ENCODE measurements at regions of chr11 and their contacts with region 1.

Region 1: DNA sequence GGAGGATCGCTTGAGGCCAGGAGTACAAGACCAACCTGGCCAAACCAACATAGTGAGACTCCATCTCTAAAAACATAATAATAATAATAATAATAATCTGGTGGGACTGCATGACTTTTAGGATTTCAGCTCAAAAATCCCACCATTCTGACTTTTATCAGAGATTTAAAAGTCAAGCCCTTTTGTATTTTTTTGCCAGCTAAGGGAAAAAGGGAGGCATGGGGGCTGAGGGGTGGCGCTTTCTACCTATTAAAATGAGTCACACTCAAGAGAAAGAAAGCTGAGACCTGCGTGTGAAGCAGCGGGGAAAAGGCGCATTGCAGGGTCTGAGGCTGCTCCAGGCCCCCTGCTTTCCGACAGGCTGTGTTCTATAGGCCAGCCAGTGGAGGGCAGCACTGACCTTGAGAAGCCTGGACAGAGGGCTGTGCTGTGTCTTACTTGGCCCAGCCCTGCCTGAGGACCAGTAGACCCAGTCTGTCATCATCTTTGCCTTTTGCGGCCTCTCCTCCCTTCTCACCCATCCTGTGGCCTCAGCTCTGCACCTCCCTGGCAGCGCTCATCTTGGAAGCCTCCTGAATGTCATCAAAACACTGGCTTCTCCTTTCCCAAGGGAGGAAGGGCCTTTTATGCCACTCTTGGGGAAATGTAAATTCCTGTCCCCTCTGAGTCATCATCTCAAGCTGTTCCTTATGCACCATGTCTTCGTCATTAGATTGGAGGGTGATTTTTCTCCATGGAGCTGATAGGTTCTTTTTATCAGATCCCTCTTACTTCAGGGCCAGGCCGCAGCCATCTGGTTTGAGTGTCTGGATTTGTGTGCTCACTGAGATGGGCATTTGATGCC is 12.7 kb upstream of the MAPK8IP1 start:
- DNase-seq: peak; percentile 73 to 86
- H3K4me3 ChIP-seq: no peak overlapping the region
- H3K27ac ChIP-seq: no peak overlapping the region
- H3K4me1 ChIP-seq: peaks cover 9 to 16% (median 13%) of the 10 kb centered on the region in 4 experiments; a peak in 6 of 7 replicates
- H3K27me3 ChIP-seq: no peaks in the 10 kb centered on the region
- CTCF ChIP-seq: peak; percentile 92 to 98 (median 95)
- EP300 ChIP-seq: no peak
- POLR2A ChIP-seq: no peak
- RAD21 ChIP-seq: peak; percentile 96 to 97

Region 2: GRCh38 chr11:45846974-45847910 is 25.5 kb before region 1 on chr11 and contains the start of gene CRY2:
- CTCF ChIA-PET with region 1: interaction called, 15 read pairs
- POLR2A ChIA-PET with region 1: no interaction called
- DNase-seq: peak; percentile 93 to 100
- H3K4me3 ChIP-seq: peak within 1 kb of the TSS; percentile 58 to 90 (median 82)
- H3K27ac ChIP-seq: peak within 1 kb of the TSS; percentile 24; the same call in 1 of the 2 replicates
- H3K4me1 ChIP-seq: peaks cover 0 to 10% (median 6%) of the 10 kb centered on the region in 4 experiments; a peak in 5 of 7 replicates
- H3K27me3 ChIP-seq: peaks cover 5 to 25% (median 12%) of the 10 kb centered on the region in 4 experiments; a peak in 6 of 7 replicates
- CTCF ChIP-seq: no peak; a peak in 1 of 4 replicates
- EP300 ChIP-seq: no peak
- POLR2A ChIP-seq: peak in 1 of 2 experiments; percentile 86; a peak in 2 of 3 replicates
- RAD21 ChIP-seq: no peak
- total RNA-seq, gene CRY2: 9.4 and 10.9 TPM in 2 replicates

Region 3: GRCh38 chr11:45885274-45885920 is 12.7 kb after region 1 on chr11 and contains the start of gene MAPK8IP1:
- CTCF ChIA-PET with region 1: interaction called, 41 read pairs
- POLR2A ChIA-PET with region 1: interaction called, 9 read pairs
- DNase-seq: peak; percentile 17 to 82
- H3K4me3 ChIP-seq: peak within 1 kb of the TSS; percentile 58 to 83 (median 71)
- H3K27ac ChIP-seq: no peak within 1 kb of the TSS
- H3K4me1 ChIP-seq: peaks cover 0 to 10% (median 5%) of the 10 kb centered on the region in 4 experiments; a peak in 5 of 7 replicates
- H3K27me3 ChIP-seq: no peaks in the 10 kb centered on the region; a peak in 2 of 7 replicates
- CTCF ChIP-seq: no peak; a peak in 1 of 4 replicates
- EP300 ChIP-seq: no peak
- POLR2A ChIP-seq: no peak
- RAD21 ChIP-seq: no peak; a peak in 1 of 4 replicates
- total RNA-seq, gene MAPK8IP1: 40.1 and 41.7 TPM in 2 replicates

Region 4: GRCh38 chr11:45917623-45918330 is 45.0 kb after region 1 on chr11 and contains the start of gene PEX16:
- CTCF ChIA-PET with region 1: interaction called, 33 read pairs
- POLR2A ChIA-PET with region 1: interaction called, 8 read pairs
- DNase-seq: peak; percentile 88 to 93
- H3K4me3 ChIP-seq: peak within 1 kb of the TSS; percentile 84 to 90 (median 88)
- H3K27ac ChIP-seq: peak within 1 kb of the TSS; percentile 64; the same call in 1 of the 2 replicates
- H3K4me1 ChIP-seq: peaks cover 12 to 28% (median 20%) of the 10 kb centered on the region in 4 experiments
- H3K27me3 ChIP-seq: peaks cover 0 to 9% (median 0%) of the 10 kb centered on the region in 4 experiments; a peak in 3 of 7 replicates
- CTCF ChIP-seq: no peak
- EP300 ChIP-seq: peak in 1 of 2 experiments; percentile 5; a peak in 1 of 3 replicates
- POLR2A ChIP-seq: peak in 1 of 2 experiments; percentile 63; a peak in 2 of 3 replicates
- RAD21 ChIP-seq: no peak
- total RNA-seq, gene PEX16: 29.2 and 29.4 TPM in 2 replicates

Region 5: GRCh38 chr11:45930031-45930794 is 57.5 kb after region 1 on chr11:
- CTCF ChIA-PET with region 1: interaction called, 26 read pairs
- POLR2A ChIA-PET with region 1: interaction called, 5 read pairs
- DNase-seq: no peak
- H3K4me3 ChIP-seq: no peak overlapping the region
- H3K27ac ChIP-seq: no peak overlapping the region
- H3K4me1 ChIP-seq: no peaks in the 10 kb centered on the region
- H3K27me3 ChIP-seq: no peaks in the 10 kb centered on the region
- CTCF ChIP-seq: no peak
- EP300 ChIP-seq: no peak
- POLR2A ChIP-seq: no peak
- RAD21 ChIP-seq: peak; percentile 6 to 35; a peak in 2 of 4 replicates

Region 6: DNA sequence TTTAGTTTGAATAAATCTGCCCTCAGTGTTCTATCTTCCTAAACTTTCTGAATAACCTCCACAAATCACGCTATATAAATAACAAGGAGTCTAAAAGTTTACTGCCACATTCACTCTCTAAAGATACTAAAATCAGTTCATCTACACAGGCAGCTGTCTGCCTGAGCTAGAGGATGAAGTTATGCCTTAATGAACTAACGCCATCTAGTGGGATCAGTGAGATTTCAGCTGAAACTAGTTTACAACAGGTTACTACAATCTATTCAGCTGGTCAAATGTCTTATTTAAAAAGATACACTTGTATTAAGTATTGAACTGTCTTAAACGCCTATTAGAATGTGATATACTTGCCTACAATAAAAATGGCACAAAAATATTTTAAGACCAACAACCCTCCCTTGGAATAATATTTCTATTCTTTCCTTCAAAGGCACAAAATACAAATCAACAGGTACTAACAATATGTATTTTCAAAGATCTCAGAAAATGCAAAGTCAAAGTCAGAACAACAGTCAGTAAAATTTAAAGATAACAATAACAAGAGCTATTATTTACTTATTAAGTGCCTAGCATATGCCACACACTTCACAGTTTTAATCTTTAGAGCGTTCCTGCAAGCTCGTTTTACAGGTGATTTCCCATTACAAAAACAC is 133.8 kb after region 1 on chr11:
- CTCF ChIA-PET with region 1: interaction called, 28 read pairs
- POLR2A ChIA-PET with region 1: no interaction called
- DNase-seq: no peak
- H3K4me3 ChIP-seq: no peak overlapping the region
- H3K27ac ChIP-seq: no peak overlapping the region
- H3K4me1 ChIP-seq: peaks cover 0 to 6% (median 2%) of the 10 kb centered on the region in 4 experiments; a peak in 2 of 7 replicates
- H3K27me3 ChIP-seq: no peaks in the 10 kb centered on the region
- CTCF ChIP-seq: peak in 2 of 3 experiments; percentile 77 to 79; a peak in 3 of 4 replicates
- EP300 ChIP-seq: no peak
- POLR2A ChIP-seq: no peak
- RAD21 ChIP-seq: peak; percentile 89 to 95

Region 7: GRCh38 chr11:46018651-46019050 is 145.9 kb after region 1 on chr11:
- CTCF ChIA-PET with region 1: no interaction called
- POLR2A ChIA-PET with region 1: no interaction called
- DNase-seq: no peak
- H3K4me3 ChIP-seq: no peak overlapping the region
- H3K27ac ChIP-seq: no peak overlapping the region
- H3K4me1 ChIP-seq: no peaks in the 10 kb centered on the region
- H3K27me3 ChIP-seq: no peaks in the 10 kb centered on the region
- CTCF ChIP-seq: no peak
- EP300 ChIP-seq: no peak
- POLR2A ChIP-seq: no peak
- RAD21 ChIP-seq: no peak

Region 8: GRCh38 chr11:46075168-46075567 is 202.4 kb after region 1 on chr11:
- CTCF ChIA-PET with region 1: no interaction called
- POLR2A ChIA-PET with region 1: no interaction called
- DNase-seq: no peak
- H3K4me3 ChIP-seq: no peak overlapping the region
- H3K27ac ChIP-seq: no peak overlapping the region
- H3K4me1 ChIP-seq: 0 out of 7 replicates have a peak, but pooled peaks cover 0 to 3% (median 0%) of the 10 kb centered on the region in 4 experiments
- H3K27me3 ChIP-seq: no peaks in the 10 kb centered on the region
- CTCF ChIP-seq: no peak
- EP300 ChIP-seq: no peak
- POLR2A ChIP-seq: no peak
- RAD21 ChIP-seq: no peak

Region 9: GRCh38 chr11:46547579-46547978 is 674.8 kb after region 1 on chr11:
- CTCF ChIA-PET with region 1: no interaction called
- POLR2A ChIA-PET with region 1: no interaction called
- DNase-seq: no peak
- H3K4me3 ChIP-seq: no peak overlapping the region
- H3K27ac ChIP-seq: no peak overlapping the region
- H3K4me1 ChIP-seq: no peaks in the 10 kb centered on the region
- H3K27me3 ChIP-seq: no peaks in the 10 kb centered on the region
- CTCF ChIP-seq: no peak
- EP300 ChIP-seq: no peak
- POLR2A ChIP-seq: no peak
- RAD21 ChIP-seq: no peak

Measured in H1 (cell line).